Mammary epithelial cell (primary cell): ENCODE measurements at regions of chr13 and their contacts with region 1.

Region 1: DNA sequence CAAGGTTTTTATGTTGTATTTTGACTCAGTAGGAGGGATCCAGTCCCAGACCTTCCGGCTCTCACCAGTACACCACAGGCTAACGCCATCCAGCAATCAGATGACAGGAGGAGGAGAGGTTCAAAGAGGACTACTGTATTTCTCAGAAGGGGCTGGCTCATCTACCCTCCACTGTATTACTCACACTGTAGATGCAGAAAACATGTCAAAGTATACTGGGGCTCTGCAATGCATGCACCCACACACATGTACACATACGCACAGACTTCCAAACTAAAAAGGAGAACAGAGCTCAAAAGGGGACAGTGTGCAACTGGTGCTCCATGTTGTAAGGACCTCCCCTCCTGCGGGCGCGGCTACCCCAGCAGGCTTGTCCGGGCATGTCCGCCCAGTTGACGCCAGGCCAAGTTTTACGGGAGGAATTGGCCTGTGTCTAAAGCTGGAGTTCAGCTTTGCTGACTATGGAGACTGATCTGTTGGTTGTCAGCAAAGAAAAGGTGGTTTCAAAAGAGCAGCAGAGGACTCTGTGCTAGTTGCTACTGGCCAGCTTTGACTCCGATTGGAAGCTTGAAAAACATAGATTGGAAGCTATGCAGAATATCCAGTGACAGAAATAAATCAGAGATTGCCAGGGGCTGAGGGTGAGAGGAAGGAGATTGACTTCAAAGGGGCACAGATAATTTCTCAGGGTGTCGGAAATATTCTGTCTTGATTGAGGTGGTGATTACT is 314.2 kb downstream of the DLEU7 start:
- DNase-seq: peak; percentile 86
- H3K4me3 ChIP-seq: no peak overlapping the region
- H3K27ac ChIP-seq: peak overlapping the region; percentile 54
- H3K4me1 ChIP-seq: peaks cover 18% of the 10 kb centered on the region
- H3K27me3 ChIP-seq: no peaks in the 10 kb centered on the region
- CTCF ChIP-seq: no peak

Region 2: DNA sequence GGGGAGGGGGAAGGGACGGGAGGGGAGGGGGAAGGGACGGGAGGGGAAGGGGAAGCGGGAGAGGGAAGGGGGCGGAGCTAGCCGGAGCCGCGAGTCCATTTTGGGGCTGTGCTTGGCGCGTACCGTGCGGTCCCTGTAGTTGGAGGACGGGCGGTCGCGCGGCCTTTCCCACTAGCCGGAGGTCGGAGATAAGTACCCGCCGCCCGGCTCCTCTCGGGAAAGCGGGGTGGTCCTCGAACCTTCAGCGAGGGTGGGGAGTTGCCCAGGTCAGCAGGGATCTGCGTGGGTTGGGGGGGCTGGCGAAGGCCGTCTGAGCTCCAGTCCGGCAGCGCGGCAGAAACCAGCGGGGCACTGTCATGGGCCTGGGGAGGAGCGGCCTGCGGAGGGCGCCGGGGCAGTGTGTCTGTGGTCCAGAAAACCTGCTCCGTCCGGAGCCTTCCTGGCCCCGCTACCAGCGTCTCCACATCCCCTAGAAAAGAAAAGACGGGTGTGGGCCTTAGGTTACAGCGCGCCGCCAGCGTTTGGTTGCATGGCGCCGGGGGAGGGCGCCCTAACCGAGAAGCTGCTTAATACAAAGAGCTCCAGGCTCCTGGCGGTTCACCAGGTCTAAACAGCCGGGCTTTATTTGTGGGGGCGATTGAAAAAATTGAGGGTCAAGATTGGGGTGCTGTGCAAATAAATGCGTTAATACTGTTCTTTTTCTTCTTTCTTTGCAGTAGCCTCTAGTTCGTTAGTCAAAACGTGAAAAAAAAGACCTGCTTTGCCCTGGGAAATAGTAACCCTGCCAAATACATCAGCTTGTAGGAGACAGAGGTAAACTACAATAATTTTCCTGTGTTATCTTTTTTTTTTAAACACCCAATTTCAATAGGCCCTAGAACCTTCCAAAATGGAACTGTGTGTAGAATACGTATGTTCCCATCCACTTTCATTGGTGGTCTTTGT is 532.1 kb before region 1 on chr13 and contains the start of gene TRIM13:
- CTCF ChIA-PET with region 1: interaction called, 3 read pairs
- dilution Hi-C with region 1: no loop called
- in situ Hi-C with region 1: loop called (anchors 25 kb)
- intact Hi-C with region 1: loop called (anchors 5 kb)
- DNase-seq: peak; percentile 79
- H3K4me3 ChIP-seq: peak within 1 kb of the TSS; percentile 69 to 85 (median 79)
- H3K27ac ChIP-seq: peak within 1 kb of the TSS; percentile 79
- H3K4me1 ChIP-seq: peaks cover 13% of the 10 kb centered on the region
- H3K27me3 ChIP-seq: no peaks in the 10 kb centered on the region
- CTCF ChIP-seq: peak; percentile 58 to 86
- total RNA-seq, gene TRIM13: 17.9 to 21.0 TPM

Region 3: DNA sequence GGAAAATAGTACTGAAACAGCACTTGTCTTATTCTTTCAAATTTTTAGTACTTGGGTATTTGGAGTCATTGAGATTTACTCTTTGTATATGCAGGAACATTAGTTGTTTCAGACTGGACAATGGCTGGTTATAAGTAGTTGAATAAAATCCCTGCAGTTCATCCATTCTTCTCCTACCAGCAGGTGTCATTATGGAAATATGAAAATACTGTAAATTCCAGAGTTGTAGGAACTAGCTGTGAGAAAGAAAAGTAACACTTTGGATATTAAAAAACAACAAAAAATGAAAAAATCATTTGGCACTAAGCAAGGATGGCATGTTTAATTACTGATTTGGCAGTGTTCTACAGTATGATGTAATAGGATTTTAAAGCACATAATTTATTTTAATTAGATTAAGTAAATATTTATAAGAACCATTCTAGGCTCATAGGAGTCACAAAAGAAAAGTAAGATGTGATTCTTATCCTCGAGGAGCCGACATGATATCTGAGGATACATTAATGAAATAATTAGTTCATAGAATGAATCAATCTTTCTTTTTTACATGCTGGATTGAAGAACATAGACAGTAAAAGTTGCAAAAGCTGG is 358.8 kb before region 1 on chr13:
- CTCF ChIA-PET with region 1: no interaction called
- dilution Hi-C with region 1: no loop called
- in situ Hi-C with region 1: no loop called
- intact Hi-C with region 1: loop called (anchors 1 kb)
- DNase-seq: peak; percentile 26
- H3K4me3 ChIP-seq: no peak overlapping the region
- H3K27ac ChIP-seq: no peak overlapping the region
- H3K4me1 ChIP-seq: no peaks in the 10 kb centered on the region
- H3K27me3 ChIP-seq: no peaks in the 10 kb centered on the region
- CTCF ChIP-seq: peak in 1 of 2 donors; percentile 47

Region 4: GRCh38 chr13:50911937-50912795 is 382.8 kb after region 1 on chr13:
- CTCF ChIA-PET with region 1: no interaction called
- dilution Hi-C with region 1: no loop called
- in situ Hi-C with region 1: no loop called
- intact Hi-C with region 1: loop called (anchors 2 kb)
- DNase-seq: peak; percentile 65
- H3K4me3 ChIP-seq: no peak overlapping the region
- H3K27ac ChIP-seq: no peak overlapping the region
- H3K4me1 ChIP-seq: peaks cover 22% of the 10 kb centered on the region
- H3K27me3 ChIP-seq: no peaks in the 10 kb centered on the region
- CTCF ChIP-seq: peak; percentile 86 to 93